ENCODE measurements at regions of chr16 and their contacts with region 1.

Region 1: GRCh38 chr16:69754469-69755310 is at the start of gene NOB1:
- DNase-seq: peak; percentile 99
- H3K4me3 Mint-ChIP-seq: peak within 1 kb of the TSS; percentile 100
- H3K27ac Mint-ChIP-seq: peak within 1 kb of the TSS; percentile 100
- H3K4me1 Mint-ChIP-seq: peaks cover 27% of the 10 kb centered on the region
- H3K27me3 Mint-ChIP-seq: no peaks in the 10 kb centered on the region
- total RNA-seq, gene NOB1: 127 and 129 TPM in 2 replicates

Region 2: DNA sequence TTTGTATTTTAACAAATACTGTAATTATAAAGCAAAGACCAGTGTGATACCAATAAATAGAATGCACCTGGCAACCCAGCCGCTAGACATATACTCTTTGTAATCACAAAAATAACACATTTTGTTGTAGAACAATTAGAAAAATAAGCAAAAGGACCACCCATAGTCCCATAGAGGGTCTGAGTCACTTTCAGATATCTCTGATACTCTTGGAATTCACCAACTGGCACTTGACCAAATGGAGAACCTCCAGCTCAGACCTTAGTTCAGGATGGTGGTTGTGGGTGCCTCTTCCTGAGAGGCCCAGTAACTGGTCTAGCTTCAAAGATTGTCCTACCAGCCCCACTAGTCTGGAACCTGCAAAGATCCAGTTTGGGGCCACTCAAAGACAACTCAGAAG is 368.1 kb before region 1 on chr16:
- intact Hi-C with region 1: loop called (anchors 1 kb)
- DNase-seq: no peak
- H3K4me3 Mint-ChIP-seq: no peak overlapping the region
- H3K27ac Mint-ChIP-seq: peak overlapping the region; percentile 87
- H3K4me1 Mint-ChIP-seq: peaks cover 21% of the 10 kb centered on the region
- H3K27me3 Mint-ChIP-seq: no peaks in the 10 kb centered on the region

Region 3: DNA sequence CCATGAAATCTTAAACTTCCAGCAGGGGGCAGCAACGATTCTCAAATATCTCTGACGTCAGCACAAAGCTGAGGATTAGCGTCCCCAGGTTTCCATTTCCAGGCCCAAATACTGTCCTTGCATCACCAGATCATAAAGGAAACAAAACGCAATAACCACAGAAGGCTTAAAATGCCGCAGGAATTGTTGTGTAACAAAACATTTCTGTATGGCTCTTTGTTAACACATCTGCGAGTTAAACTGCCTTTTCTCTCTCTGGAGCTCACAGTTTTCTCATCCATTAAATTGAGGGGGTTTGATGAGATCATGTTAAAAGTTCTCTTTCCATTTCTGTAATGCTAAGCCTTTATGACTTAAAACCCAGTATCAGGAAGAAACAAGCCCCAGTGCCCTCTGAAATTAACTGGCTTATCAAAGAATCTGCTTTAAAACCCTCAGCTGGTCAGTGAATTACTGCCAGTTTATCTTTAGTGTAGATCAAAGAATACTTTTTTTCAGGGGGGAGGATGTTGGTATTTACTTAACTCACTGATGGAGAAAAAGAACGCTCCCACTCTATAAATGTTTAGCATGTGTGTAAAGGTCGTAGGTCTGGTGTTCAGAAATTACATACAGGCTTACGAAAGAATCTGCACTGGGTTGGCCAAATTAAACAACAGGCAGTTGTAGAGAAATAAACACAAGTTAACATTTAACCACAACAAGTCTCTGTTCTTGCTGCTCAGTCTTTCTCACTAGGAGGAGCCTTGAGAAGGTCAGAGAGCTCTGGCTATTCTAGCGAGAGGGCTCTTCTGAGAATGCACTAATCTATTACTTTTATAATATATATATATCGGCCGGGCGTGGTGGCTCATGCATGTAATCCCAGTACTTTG is 358.3 kb before region 1 on chr16:
- intact Hi-C with region 1: loop called (anchors 1 kb)
- DNase-seq: peak; percentile 92
- H3K4me3 Mint-ChIP-seq: peak overlapping the region; percentile 4
- H3K27ac Mint-ChIP-seq: peak overlapping the region; percentile 15
- H3K4me1 Mint-ChIP-seq: peaks cover 15% of the 10 kb centered on the region
- H3K27me3 Mint-ChIP-seq: peaks cover 3% of the 10 kb centered on the region

Region 4: DNA sequence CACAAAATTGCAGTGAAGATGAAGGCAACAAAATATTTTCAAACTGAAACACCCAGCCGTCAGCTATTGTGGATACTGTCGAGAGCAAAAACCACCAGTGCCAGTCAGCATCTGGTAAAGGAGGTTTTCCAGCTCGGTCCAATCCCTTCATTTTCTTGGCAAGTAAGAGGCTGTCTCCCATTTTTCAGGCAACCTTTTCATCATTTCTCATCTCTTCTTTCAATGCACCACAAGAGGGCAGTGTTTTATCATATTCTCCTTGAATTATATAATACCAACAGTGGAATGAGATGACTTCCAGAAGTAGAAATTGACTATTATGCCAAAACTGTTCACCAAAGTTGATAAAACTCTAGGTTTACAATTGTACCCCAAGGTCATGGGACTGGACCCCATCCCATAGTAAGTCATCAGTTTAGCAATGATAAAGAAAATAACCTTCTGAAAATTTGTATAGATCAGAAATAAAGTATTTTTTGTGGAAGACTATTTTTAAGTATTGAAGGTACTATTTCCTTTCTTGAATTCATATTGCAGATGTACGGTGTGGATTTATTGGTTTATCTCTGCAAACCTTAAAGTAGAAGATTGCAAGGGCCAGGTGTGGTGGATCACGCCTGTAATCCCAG is 45.1 kb before region 1 on chr16:
- intact Hi-C with region 1: loop called (anchors 1 kb)
- DNase-seq: peak; percentile 74
- H3K4me3 Mint-ChIP-seq: no peak overlapping the region
- H3K27ac Mint-ChIP-seq: no peak overlapping the region
- H3K4me1 Mint-ChIP-seq: peaks cover 9% of the 10 kb centered on the region
- H3K27me3 Mint-ChIP-seq: no peaks in the 10 kb centered on the region

Region 5: GRCh38 chr16:69726296-69727060 is 28.2 kb before region 1 on chr16 and contains the start of gene NQO1:
- intact Hi-C with region 1: loop called (anchors 2 kb)
- DNase-seq: peak; percentile 98
- H3K4me3 Mint-ChIP-seq: peak within 1 kb of the TSS; percentile 93
- H3K27ac Mint-ChIP-seq: peak within 1 kb of the TSS; percentile 98
- H3K4me1 Mint-ChIP-seq: peaks cover 38% of the 10 kb centered on the region
- H3K27me3 Mint-ChIP-seq: no peaks in the 10 kb centered on the region
- total RNA-seq, gene NQO1: 9.2 and 9.8 TPM in 2 replicates

Measured in activated CD4-positive, alpha-beta T cell treated with anti-CD3 and anti-CD28 coated beads, Interleukin-2, amount 10 ng/mL, durations not matched to agents 24 days and 14 days (primary cell).